ENCODE measurements at regions of chr1 and their contacts with region 1.

Region 1: DNA sequence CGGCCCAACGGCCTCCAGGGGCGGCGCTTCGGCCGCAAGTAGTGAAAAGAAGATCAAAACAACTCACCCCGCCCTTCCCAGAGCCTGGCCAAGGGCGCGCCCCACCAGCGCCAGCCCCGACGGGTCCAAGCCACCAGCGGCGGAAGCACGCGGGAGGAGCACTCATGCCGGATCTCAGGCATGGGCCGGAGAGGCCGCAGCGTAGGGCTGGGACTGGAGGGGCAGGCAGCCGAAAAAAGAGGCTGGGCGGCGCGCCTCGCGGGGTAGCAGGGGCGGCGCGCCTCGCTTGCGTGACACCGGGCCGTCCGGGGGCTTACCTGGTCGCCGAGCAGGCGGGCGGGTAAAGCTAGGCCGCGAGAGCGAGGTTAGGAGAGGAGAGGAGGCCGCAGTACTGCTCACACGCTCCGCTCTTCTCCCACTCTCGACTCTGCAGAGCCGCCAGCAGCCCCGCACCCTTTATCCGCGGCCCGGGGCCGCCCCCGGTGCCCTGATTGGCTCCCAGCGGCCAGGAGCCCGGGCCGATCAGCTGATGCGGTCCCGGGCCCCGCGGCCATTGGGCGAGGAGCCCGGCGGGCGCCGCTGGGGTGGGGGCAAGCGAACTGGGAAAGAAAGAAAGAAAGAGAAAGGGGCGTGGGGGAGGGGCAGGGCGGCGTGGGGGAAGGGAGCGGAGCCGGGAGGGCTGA is at the start of gene GLUL:
- DNase-seq: peak; percentile 99
- ATAC-seq: peak; percentile 93
- total RNA-seq, gene GLUL: 433 TPM

Region 2: GRCh38 chr1:182084487-182085316 is 306.8 kb before region 1 on chr1:
- intact Hi-C with region 1: loop called (anchors 1 kb)
- DNase-seq: peak; percentile 91
- ATAC-seq: peak; percentile 93

Region 3: GRCh38 chr1:182143154-182143657 is 248.3 kb before region 1 on chr1:
- intact Hi-C with region 1: loop called (anchors 1 kb)
- DNase-seq: peak; percentile 94
- ATAC-seq: peak; percentile 64

Region 4: DNA sequence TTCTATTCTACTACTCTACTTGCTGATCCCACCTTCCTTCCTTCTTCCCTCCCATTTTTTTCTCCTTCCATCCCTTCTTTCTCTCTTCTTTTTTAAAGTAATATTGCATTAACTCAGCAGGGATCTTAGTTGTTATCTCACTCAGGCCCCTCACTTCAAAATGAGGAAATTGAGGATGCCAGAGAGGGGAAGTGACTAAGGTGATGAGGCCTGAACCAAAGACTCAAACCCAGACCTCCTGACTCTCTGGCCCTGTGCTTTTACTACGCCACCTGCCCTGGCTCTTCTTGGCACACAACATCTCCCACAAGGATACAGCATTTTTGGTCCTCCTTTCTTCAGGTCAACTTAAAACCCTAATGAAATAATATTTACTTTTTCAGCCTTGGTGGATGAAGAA is 178.3 kb before region 1 on chr1:
- intact Hi-C with region 1: loop called (anchors 5 kb)
- DNase-seq: no peak
- ATAC-seq: no peak

Region 5: DNA sequence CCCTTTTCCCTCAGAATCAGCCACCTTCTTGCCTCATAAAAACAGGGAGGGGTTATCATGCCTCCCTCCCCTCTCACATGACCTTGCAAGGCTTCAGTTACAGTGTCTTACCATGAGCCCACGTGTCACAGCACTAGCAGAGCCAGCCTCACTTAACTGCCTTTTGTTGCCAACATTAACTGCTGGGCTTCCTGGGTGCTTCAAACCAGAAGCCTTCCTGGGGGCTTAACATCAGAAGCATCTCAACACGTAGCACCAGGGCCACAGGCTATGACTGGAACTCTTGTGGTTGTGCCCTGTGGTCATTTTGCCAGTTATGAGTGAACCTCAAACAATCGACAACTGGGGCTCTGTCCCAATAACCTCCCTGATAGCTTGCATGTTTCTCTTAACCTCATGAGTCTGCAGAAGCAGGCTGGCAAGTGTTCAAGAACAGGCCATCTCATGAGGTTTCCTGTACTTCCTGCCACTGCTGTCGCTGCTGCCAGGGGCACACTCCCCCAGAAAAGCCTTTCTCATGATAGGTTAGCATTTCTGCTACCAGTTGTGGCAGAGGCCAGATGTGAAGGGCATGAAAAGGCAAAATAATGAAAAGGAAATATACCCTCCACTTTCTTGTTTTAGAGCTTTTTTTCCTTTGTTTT is 132.2 kb before region 1 on chr1:
- intact Hi-C with region 1: loop called (anchors 2 kb)
- DNase-seq: peak; percentile 69
- ATAC-seq: peak; percentile 63

Region 6: GRCh38 chr1:182291584-182292192 is 99.8 kb before region 1 on chr1:
- intact Hi-C with region 1: loop called (anchors 2 kb)
- DNase-seq: no peak
- ATAC-seq: peak; percentile 49

Region 7: DNA sequence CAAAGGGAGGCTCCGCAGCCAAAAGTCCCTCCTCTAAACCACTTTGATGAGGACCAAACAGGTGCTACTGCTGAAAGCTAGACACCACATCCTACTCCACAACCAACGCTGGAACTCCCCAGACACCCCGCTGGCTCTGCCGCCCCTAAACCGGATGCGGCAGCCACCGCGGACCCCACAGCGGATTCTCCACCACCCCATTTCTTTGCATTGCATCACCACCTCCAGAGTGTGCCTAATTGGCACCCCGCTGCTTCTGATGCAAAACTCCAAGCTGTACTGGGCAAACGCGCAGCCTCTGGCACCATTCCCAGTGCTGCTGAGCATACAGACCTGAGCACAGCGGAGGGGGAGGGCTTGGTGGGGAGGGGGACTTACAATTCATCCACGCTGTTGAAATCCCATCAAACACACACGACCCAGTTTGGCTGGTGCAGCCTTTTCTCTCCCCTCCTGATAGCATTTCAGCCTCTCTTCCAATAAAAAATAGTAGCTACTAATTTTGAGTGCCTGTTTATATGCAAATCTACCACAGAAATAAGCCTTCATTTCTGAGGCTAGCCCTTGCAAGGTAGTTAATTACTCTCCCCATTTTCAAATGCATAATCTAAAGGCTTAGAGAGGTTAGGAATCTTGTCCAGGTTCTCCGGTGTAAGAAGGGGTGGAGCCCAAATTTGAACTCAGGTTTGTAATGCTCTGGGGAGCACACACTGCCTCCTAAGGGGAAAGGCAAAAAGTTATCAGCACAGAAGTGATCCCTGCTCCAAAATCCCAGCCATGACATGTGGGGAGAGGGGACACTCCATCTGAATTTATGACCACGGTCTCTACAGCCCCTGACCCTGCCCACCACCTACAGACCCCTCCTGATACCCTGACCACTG is 224.9 kb after region 1 on chr1:
- intact Hi-C with region 1: no loop called
- DNase-seq: peak; percentile 86
- ATAC-seq: peak; percentile 48